ENCODE measurements at regions of chr17 and their contacts with region 1.

Region 1: DNA sequence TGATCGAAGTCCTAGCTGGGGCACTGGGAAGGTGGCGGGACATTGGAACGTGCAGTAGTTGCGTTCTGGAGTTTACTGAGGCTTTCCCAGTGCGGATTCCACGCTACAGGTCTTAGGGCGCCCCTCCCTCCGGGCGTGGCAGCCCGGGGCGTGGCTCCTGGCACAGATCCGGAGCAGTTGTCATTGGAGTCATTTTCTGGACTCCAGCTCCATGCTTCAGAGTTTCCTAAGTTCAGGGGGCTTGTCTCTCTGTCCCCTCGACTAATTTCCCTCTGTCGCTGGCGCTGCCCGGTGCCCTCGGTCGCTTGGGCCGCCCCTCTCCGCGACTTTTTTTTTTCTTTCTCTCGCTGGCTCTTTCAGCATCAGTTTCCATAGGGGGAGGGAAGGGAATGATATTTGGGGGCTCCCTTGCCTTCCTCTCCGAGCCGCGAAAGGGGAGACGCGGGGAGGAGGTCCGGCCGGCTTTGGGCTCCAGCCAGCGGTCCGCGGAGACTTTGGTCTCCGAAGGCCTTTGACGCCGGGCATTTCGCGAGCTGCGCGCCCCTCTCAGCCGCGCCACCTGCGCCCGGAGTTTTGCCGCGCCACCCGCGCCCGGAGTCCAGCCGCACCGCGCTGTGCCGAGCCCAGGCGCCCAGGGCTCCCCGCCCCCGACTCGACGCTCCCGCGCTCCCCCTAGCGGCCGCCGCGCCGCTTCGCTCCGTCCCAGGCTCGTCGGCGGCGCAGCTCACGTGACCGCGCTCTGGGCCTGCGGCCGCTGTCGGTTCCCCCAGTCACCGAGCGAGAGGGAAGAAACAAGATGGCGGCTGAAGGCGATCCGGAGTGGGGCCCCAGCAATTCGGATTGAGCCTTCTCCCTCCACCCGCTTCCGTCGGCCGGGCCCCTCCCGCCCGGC is at the start of gene BPTF:
- DNase-seq: peak; percentile 84 to 95 (median 90)
- ATAC-seq: peak; percentile 93
- H3K4me3 ChIP-seq: peak within 1 kb of the TSS; percentile 77
- H3K4me3 Mint-ChIP-seq: peak within 1 kb of the TSS; percentile 85 to 99 (median 98)
- H3K27ac ChIP-seq: peak within 1 kb of the TSS; percentile 74
- H3K27ac Mint-ChIP-seq: peak within 1 kb of the TSS; percentile 96 to 99 (median 98)
- H3K4me1 ChIP-seq: peaks cover 17 to 28% of the 10 kb centered on the region in 2 donors
- H3K4me1 Mint-ChIP-seq: peaks cover 20 to 39% (median 33%) of the 10 kb centered on the region in 7 donors
- H3K27me3 ChIP-seq: no peaks in the 10 kb centered on the region
- H3K27me3 Mint-ChIP-seq: peaks cover 0 to 23% (median 0%) of the 10 kb centered on the region in 5 donors
- total RNA-seq, gene BPTF: 111 to 219 (median 163) TPM

Region 2: GRCh38 chr17:67183531-67183930 is 641.5 kb before region 1 on chr17:
- CTCF ChIA-PET with region 1: no interaction called
- POLR2A ChIA-PET with region 1: no interaction called
- intact Hi-C with region 1: no loop called
- DNase-seq: no peak
- ATAC-seq: no peak
- H3K4me3 ChIP-seq: no peak overlapping the region
- H3K4me3 Mint-ChIP-seq: no peak overlapping the region
- H3K27ac ChIP-seq: no peak overlapping the region
- H3K27ac Mint-ChIP-seq: no peak overlapping the region
- H3K4me1 ChIP-seq: no peaks in the 10 kb centered on the region
- H3K4me1 Mint-ChIP-seq: peaks cover 0 to 9% (median 5%) of the 10 kb centered on the region in 7 donors
- H3K27me3 ChIP-seq: no peaks in the 10 kb centered on the region
- H3K27me3 Mint-ChIP-seq: no peaks in the 10 kb centered on the region

Region 3: DNA sequence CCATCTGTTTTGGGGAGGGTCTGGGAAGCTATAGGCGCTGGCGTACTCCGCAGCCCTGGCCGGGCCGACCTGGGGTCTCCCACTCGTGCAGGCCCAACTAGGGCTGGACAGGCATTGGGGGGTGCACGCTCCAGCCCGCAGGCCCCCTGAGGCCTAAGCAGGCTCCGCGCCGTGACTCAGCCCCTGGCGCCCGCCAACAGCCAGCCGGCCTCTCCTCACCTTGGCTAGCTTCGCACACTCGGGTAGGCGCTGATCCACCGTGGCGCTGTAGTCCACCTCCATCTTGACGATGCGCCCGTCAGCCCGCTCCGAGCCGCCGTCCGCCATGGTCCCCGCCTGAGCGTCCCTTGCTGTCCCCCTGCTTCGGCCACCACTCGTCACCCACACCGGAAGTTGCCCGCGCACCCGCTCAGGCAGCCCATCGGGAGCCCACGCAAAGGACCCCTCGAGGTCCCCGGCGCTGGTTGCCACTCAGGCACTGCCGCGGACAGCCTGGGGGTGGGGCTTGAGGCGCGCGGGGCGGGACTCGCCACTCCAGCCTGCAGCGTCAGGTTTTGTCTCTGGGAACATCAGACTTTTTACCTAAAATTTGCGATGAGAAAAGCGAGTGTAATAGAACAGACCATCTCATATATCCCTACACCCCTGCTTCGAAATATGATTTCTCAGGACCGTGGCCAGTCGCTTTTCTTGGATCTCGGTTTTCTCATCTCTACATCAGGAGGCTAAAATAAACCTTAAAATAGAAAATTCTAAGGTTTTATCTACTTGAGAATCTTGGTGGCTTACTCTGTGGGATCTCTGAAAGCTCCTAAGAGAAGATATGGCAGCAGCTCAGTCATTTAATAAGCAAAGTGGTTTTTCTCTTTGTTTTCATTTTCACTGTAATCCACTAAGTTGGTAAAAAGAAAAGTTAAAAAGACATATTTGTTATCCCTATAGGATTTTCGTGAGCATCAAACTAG is 458.5 kb before region 1 on chr17 and contains the start of gene PSMD12:
- CTCF ChIA-PET with region 1: no interaction called
- POLR2A ChIA-PET with region 1: interaction called, 3 read pairs
- intact Hi-C with region 1: loop called in 1 of 2 experiments (anchors 1 kb)
- DNase-seq: peak; percentile 86 to 96 (median 93)
- ATAC-seq: peak; percentile 99
- H3K4me3 ChIP-seq: peak within 1 kb of the TSS; percentile 76
- H3K4me3 Mint-ChIP-seq: peak within 1 kb of the TSS; percentile 91 to 99 (median 96)
- H3K27ac ChIP-seq: peak within 1 kb of the TSS; percentile 89
- H3K27ac Mint-ChIP-seq: peak within 1 kb of the TSS; percentile 82 to 99 (median 96)
- H3K4me1 ChIP-seq: peaks cover 22 to 25% of the 10 kb centered on the region in 2 donors
- H3K4me1 Mint-ChIP-seq: peaks cover 32 to 51% (median 47%) of the 10 kb centered on the region in 7 donors
- H3K27me3 ChIP-seq: no peaks in the 10 kb centered on the region
- H3K27me3 Mint-ChIP-seq: no peaks in the 10 kb centered on the region
- total RNA-seq, gene PSMD12: 35.8 to 54.4 (median 40.5) TPM

Region 4: DNA sequence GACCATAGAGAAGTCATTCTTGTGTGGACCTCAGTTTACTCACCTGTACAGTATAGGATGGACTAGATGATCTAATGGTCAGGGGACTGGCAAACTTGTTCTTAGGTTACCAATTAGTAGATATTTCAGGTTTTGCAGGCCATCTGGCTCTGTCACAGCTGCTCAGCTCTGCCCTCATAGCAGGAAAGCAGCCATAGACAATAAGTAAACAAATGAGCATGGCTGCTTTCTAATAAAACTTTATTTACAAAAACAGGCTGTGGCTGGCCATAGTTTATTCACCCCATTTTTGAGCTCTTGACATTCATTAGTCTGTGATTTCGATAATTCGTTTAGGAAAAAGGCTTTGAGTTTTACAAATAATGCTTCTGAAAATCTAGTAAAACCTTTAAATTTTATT is 13.0 kb after region 1 on chr17:
- CTCF ChIA-PET with region 1: no interaction called
- POLR2A ChIA-PET with region 1: no interaction called
- intact Hi-C with region 1: loop called in 1 of 2 experiments (anchors 1 kb)
- DNase-seq: no peak
- ATAC-seq: no peak
- H3K4me3 ChIP-seq: no peak overlapping the region
- H3K4me3 Mint-ChIP-seq: peak overlapping the region in 6 of 10 donors; percentile 14 to 70 (median 60)
- H3K27ac ChIP-seq: no peak overlapping the region
- H3K27ac Mint-ChIP-seq: peak overlapping the region in 3 of 9 donors; percentile 20 to 63 (median 43)
- H3K4me1 ChIP-seq: peaks cover 0 to 20% of the 10 kb centered on the region in 2 donors
- H3K4me1 Mint-ChIP-seq: peaks cover 57 to 95% (median 90%) of the 10 kb centered on the region in 7 donors
- H3K27me3 ChIP-seq: no peaks in the 10 kb centered on the region
- H3K27me3 Mint-ChIP-seq: no peaks in the 10 kb centered on the region

Region 5: DNA sequence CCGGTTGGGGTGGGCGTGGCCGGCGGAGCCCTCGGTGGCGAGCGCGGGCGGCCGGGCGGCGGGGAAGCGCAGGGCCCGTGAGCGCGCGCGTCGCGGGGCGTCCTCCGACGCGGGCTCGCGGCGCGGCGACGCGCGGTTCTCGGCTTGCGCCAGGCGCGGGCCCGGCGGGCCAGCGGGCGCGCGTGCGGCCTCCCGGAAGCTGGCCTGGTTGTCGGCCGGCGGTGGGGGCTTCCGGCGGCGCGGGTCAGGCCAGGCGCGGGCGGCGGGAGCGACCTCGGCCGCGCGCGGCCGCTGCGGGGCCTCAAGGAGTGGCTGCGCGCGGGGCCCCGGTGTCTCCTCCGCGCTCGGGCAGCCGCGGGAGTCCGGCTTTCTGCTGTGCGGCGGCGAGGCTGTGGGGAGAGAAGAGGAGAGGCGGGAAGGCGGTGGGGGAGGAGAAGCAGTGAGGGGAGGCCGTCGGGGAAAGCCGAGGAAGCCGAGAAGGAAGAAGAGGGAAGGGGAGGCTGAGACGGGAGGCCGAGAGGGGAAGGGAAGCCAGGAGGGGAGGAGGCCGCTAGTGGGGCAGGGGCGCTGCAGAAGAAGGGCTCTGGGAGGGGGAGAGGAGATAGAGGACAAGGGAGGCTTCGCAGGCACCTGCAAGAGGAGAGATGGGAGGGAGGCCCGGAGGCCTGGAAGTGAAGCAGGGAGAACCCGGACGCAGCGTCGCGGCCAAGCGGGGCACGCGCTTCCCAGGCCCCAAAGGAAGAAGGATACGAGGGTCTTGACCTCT is 168.8 kb after region 1 on chr17:
- CTCF ChIA-PET with region 1: no interaction called
- POLR2A ChIA-PET with region 1: no interaction called
- intact Hi-C with region 1: loop called (anchors 1 to 10 kb)
- DNase-seq: peak in 3 of 9 donors; percentile 13 to 29 (median 22)
- ATAC-seq: peak; percentile 89
- H3K4me3 ChIP-seq: peak overlapping the region; percentile 50
- H3K4me3 Mint-ChIP-seq: peak overlapping the region; percentile 74 to 95 (median 86)
- H3K27ac ChIP-seq: peak overlapping the region; percentile 51
- H3K27ac Mint-ChIP-seq: peak overlapping the region in 8 of 9 donors; percentile 38 to 86 (median 54)
- H3K4me1 ChIP-seq: peaks cover 19 to 24% of the 10 kb centered on the region in 2 donors
- H3K4me1 Mint-ChIP-seq: peaks cover 21 to 38% (median 32%) of the 10 kb centered on the region in 7 donors
- H3K27me3 ChIP-seq: peaks cover 0 to 7% of the 10 kb centered on the region in 2 donors
- H3K27me3 Mint-ChIP-seq: peaks cover 5 to 38% (median 21%) of the 10 kb centered on the region in 5 donors

Region 6: DNA sequence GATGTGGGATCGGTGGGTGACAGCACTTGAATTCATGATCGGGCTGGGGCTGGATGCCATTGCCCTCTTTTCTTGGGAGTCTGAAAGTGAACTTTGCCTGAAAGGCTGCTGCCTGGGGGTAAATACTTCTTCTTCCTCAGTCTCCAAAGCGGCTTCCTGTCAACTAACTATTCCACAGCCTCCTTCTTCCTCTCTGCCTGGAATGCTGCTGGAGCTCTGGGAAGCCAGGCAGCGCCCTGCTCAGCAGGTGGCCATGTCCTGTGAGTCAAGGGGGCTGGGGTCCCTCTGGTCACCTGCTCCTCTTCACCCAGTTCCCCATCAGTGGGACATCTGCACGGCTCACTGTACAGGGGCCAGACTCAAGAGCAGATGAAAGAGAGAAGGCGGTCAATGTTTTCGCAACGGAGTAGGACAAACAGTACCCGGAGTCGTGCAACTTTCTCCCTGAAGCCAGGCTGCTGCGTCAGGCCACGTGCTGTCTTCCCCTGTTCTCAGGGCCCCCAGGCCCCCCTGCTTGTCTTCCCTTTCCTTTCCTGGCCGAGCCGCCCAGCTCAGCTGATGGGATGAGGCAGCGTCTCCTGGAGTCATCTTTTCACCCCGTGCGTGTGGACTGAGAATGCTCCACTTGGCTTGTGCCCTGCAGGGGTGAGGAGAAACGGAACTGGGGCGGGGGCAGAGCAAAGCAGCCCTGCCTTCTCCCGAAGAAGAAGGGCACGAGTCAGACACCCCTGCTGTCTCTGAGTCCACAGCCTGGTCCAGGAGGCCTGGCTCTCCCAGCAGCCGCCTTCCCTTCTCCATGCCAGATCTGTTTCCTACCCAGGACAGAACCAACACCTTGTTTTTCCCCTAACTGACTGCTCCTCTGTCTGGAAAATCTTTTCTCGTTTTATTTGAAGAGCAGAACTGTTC is 553.1 kb after region 1 on chr17:
- CTCF ChIA-PET with region 1: no interaction called
- POLR2A ChIA-PET with region 1: no interaction called
- intact Hi-C with region 1: no loop called
- DNase-seq: no peak
- ATAC-seq: peak; percentile 72
- H3K4me3 ChIP-seq: no peak overlapping the region
- H3K4me3 Mint-ChIP-seq: no peak overlapping the region
- H3K27ac ChIP-seq: no peak overlapping the region
- H3K27ac Mint-ChIP-seq: no peak overlapping the region
- H3K4me1 ChIP-seq: peaks cover under 1 to 2% of the 10 kb centered on the region in 2 donors
- H3K4me1 Mint-ChIP-seq: peaks cover 5 to 14% (median 10%) of the 10 kb centered on the region in 7 donors
- H3K27me3 ChIP-seq: no peaks in the 10 kb centered on the region
- H3K27me3 Mint-ChIP-seq: peaks cover 0 to 3% (median 0%) of the 10 kb centered on the region in 5 donors

Measured in naive thymus-derived CD4-positive, alpha-beta T cell (primary cell).